Vagina (tissue), 2 donors: ENCODE measurements at regions of chr2 and their contacts with region 1.

Region 1: DNA sequence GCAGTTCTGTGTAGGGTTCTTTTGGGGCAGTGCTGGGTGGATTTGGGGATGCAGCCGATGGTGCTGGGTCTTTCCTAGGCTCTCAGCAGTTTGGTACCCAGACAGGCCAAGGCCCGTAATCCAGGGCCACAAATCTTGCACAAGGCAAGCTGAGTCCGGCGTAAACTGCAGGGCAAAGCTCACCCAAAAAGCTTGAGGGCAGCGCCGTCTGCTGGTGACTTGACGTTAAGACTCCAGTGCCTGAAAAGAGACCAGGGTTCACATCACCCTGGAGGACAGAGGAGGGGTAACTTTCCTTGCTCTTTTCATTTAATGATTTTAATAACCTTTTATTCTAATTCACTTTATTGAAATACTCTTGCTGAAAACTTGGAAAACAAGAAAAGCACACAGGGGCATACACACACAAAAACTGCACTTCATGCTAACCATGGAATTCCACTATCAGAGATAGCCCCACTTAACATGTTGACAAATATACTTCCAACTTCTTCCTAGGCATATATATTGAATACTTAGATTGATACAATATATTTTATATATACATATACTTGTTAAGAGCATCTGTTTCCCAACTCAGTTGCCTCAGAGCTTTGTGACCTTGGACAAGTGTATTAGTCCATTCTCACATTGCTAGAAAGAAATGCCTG is 38.9 kb downstream of the CNGA3 start:
- DNase-seq: no peak
- H3K4me3 ChIP-seq: no peak overlapping the region
- H3K27ac ChIP-seq: no peak overlapping the region
- H3K4me1 ChIP-seq: no peaks in the 10 kb centered on the region
- H3K27me3 ChIP-seq: no peaks in the 10 kb centered on the region
- CTCF ChIP-seq: peak; percentile 71 to 88 (median 71)
- POLR2A ChIP-seq: no peak

Region 2: GRCh38 chr2:97806738-97807618 is 578.2 kb before region 1 on chr2:
- intact Hi-C with region 1: loop called (anchors 10 kb)
- DNase-seq: no peak
- H3K4me3 ChIP-seq: no peak overlapping the region
- H3K27ac ChIP-seq: no peak overlapping the region
- H3K4me1 ChIP-seq: no peaks in the 10 kb centered on the region
- H3K27me3 ChIP-seq: no peaks in the 10 kb centered on the region
- CTCF ChIP-seq: peak; percentile 81 to 96 (median 88)
- POLR2A ChIP-seq: no peak